Right ventricle myocardium superior (tissue), 1 donor: ENCODE measurements at regions of chr7 and their contacts with region 1.

Region 1: DNA sequence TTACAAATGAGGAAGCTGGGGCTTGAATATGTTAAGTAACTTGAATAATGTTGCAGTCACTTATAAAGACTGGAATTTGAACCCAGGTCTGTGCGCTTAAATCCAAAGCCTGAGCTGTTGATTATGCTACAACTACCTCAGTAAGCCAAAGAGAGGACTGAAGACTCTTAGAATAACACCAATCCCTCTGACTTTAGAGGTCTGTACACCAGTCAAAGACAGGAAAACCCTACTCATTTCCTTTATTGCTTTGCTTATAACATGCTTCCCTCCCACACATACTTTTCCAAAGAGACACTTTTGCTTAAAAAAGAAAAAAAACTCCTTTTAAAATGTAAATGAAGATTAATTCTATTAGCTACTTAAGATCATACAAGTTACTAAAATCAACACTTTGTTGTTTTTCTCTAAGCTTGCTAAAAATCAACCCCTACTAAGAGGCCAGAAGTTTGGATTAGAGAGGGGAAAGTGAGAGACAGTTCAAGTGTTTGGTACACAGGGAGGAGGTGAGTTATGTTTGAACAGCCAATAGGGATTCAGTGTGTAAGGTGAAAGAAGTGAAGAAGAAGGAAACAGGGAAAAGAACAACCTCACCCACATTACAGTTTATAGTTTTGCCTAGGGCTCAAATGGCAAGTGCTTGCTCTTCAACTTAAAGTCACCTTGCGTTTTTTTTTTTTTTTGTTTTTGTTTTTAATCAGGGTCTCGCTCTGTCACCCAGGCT is 74.8 kb downstream of the MDH2 start:
- DNase-seq: no peak
- ATAC-seq: no peak

Region 2: DNA sequence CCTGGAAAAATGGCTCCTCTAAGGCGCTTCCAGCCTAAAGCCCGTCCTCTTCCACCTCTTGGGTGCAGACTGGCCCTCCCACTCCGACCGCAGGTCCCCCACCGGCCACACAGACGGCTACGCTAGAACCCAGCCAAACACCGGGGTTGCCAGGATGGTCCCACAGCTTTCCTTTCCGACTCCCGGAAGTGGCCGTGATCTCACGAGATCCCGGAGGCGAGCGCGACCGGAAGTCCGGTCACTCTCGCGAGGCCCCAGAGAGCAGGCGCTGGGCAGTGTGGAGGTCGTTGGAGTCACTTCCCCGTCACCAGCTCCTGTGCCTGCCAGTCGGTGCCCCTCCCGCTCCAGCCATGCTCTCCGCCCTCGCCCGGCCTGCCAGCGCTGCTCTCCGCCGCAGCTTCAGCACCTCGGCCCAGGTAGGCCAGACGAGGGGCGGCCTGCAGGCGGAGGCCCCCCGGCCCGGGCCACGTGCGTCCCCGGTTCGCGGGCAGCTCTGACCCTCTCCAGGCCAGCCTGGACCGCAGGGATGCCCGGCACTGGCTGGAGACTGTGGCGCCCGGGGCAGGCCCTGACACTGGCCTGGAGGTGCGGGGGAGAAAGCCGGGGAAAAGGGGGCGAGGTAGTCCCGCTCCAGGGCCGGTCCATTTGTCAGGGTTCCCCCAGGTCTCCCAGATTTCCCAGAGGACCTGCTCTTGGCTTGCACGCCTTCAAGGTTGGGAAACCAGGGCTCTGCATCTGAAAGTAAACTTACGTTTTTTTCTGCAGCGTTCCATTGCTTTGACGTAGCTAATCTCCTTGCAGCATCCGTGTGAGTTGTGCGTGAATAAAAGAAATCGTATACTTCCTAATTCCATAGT is 74.6 kb before region 1 on chr7 and contains the starts of genes MDH2 and STYXL1:
- intact Hi-C with region 1: loop called (anchors 10 kb)
- DNase-seq: peak; percentile 96
- ATAC-seq: peak; percentile 97
- total RNA-seq, gene MDH2: 639 TPM
- total RNA-seq, gene STYXL1: 21.4 TPM